ENCODE measurements at regions of chr17 and their contacts with region 1.

Region 1: DNA sequence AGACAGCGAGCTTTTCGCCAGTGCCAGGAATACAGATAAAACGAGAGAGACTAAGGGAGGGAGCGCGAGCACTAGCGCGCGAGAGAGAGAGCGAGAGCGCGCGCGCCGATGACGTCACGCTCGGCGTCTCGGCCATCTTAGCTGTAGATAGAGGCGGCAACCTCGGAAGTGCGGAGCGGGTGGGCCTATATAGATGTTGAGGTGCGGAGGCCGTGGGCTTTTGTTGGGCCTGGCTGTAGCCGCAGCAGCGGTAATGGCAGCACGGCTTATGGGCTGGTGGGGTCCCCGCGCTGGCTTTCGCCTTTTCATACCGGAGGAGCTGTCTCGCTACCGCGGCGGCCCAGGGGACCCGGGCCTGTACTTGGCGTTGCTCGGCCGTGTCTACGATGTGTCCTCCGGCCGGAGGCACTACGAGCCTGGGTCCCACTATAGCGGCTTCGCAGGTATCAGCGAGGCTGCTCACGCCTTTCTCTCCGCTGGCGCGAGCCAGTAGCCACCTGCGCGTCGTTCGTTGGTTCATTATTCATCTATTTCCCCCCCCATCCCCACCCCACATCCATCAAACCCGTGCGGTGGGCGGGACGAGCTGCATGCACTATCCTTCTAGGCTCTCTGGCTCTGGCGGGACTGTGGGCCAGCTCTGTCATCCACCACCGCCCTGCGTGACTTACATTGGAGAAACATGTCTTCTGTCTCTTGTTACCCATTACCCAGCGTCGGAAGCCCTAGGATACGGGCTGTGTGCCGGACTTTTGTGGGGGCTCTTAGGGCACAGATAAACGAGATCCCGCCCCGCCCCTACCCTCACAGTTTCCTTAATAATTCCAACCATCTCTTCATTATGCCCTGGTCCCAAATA is 795 bp downstream of the CYB5D2 start:
- DNase-seq: peak; percentile 91
- H3K4me3 Mint-ChIP-seq: peak overlapping the region; percentile 99
- H3K27ac Mint-ChIP-seq: peak overlapping the region; percentile 100
- H3K4me1 Mint-ChIP-seq: peaks cover 42% of the 10 kb centered on the region
- H3K27me3 Mint-ChIP-seq: no peaks in the 10 kb centered on the region

Region 2: GRCh38 chr17:3723556-3724369 is 420.0 kb before region 1 on chr17 and contains the start of gene HASPIN:
- CTCF ChIA-PET with region 1: interaction called, 3 read pairs
- intact Hi-C with region 1: loop called (anchors 10 kb)
- DNase-seq: peak; percentile 94
- H3K4me3 Mint-ChIP-seq: peak within 1 kb of the TSS; percentile 93
- H3K27ac Mint-ChIP-seq: peak within 1 kb of the TSS; percentile 89
- H3K4me1 Mint-ChIP-seq: peaks cover 57% of the 10 kb centered on the region
- H3K27me3 Mint-ChIP-seq: no peaks in the 10 kb centered on the region
- total RNA-seq, gene HASPIN: 20.5 to 21.8 TPM

Region 3: DNA sequence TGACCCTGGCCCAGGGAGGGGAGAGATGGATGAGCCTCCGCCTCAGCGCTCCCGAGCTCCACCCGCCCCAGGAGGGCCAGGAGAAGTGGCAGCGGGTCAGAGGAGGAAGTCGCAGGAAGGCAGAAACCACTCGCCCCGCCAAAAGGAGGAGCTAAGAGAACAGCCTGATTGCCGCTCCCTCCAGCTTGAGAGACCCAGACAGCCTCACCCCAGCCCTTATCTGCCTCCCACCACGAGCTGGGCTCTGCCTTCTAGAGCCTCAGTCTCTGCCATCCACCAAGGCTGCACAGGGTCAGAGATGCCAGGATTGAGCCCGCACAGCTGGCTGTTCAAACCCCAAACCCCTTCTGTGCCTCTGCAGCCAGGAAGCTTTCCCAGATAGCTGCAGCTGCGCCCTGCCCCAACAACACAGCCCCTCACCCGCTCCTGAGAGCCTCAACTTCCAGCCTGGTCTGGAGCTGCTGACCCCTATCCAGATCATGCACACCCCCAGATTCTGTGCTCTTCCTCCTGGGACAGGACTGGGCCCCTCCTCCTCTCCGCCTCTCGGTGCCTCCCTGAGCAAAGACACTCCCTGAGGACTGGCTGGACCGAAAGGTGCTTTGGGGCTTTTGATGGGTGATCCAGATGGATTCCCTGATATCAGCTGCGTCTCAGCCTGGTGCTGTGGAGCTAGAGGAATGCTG is 178.5 kb before region 1 on chr17:
- CTCF ChIA-PET with region 1: no interaction called
- intact Hi-C with region 1: loop called (anchors 1 kb)
- DNase-seq: peak; percentile 83
- H3K4me3 Mint-ChIP-seq: peak overlapping the region; percentile 91
- H3K27ac Mint-ChIP-seq: peak overlapping the region; percentile 89
- H3K4me1 Mint-ChIP-seq: peaks cover 38% of the 10 kb centered on the region
- H3K27me3 Mint-ChIP-seq: no peaks in the 10 kb centered on the region

Region 4: DNA sequence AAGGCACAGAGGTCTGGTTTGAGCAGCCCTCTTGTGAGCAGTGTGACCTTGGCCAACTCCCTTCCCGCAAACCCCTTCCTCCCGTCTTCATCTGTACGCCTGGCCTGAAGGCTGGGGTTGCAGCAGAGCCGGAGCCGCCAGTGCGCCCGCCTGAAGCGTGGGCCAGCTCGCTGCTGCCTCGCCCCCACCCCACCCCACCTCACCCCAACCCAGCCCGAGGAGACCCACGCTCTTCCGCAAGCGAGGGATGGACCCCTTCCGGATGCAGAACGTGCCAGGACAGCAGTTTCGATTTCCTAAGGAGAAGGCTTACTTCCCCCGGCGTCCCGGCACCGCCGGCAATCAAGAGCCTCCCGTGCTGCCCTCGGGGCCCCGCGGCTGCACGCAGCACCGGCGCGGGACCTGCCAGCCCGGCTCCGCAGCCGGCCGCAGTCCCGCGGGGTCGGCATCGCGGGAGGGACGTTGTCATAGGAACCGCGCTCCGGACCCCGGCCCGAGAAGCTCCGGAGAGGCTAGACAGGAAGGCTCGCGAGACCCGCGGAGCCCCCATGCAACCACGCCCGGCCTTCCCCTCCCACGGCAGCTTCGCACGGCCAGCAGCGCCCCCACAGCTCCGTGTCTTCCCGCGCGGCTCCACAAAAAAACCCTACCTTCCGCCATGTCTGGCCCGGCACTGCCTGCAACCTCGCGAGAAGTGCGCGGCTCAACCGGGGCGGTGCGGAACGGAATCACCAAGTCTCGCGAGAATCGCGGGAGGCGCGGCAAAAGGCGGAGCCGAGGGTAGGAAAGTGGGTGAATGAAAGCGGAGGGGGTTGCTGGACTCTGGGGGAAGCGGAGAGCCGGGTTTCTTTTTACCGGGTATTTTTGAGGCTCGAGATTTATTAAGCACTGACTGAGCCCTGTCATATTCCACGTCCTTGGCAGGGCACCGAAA is 119.8 kb after region 1 on chr17 and contains the start of gene ANKFY1:
- CTCF ChIA-PET with region 1: no interaction called
- intact Hi-C with region 1: loop called (anchors 1 kb)
- DNase-seq: peak; percentile 99
- H3K4me3 Mint-ChIP-seq: peak within 1 kb of the TSS; percentile 89
- H3K27ac Mint-ChIP-seq: peak within 1 kb of the TSS; percentile 83
- H3K4me1 Mint-ChIP-seq: peaks cover 34% of the 10 kb centered on the region
- H3K27me3 Mint-ChIP-seq: no peaks in the 10 kb centered on the region
- total RNA-seq, gene ANKFY1: 36.6 to 37.4 TPM

Region 5: GRCh38 chr17:4389079-4389478 is 245.3 kb after region 1 on chr17:
- CTCF ChIA-PET with region 1: no interaction called
- intact Hi-C with region 1: no loop called
- DNase-seq: no peak
- H3K4me3 Mint-ChIP-seq: no peak overlapping the region
- H3K27ac Mint-ChIP-seq: no peak overlapping the region
- H3K4me1 Mint-ChIP-seq: no peaks in the 10 kb centered on the region
- H3K27me3 Mint-ChIP-seq: no peaks in the 10 kb centered on the region

Region 6: GRCh38 chr17:4796553-4796921 is 652.7 kb after region 1 on chr17:
- CTCF ChIA-PET with region 1: no interaction called
- intact Hi-C with region 1: loop called (anchors 5 kb)
- DNase-seq: peak; percentile 44
- H3K4me3 Mint-ChIP-seq: peak overlapping the region; percentile 100
- H3K27ac Mint-ChIP-seq: peak overlapping the region; percentile 97
- H3K4me1 Mint-ChIP-seq: peaks cover 28% of the 10 kb centered on the region
- H3K27me3 Mint-ChIP-seq: no peaks in the 10 kb centered on the region